MCF 10A (cell line): ENCODE measurements at regions of chr6 and their contacts with region 1.

Region 1: GRCh38 chr6:13711733-13712598 is at the start of gene RANBP9:
- DNase-seq: peak; percentile 82
- H3K4me3 Mint-ChIP-seq: peak within 1 kb of the TSS; percentile 99
- H3K27ac Mint-ChIP-seq: peak within 1 kb of the TSS; percentile 93
- H3K4me1 Mint-ChIP-seq: peaks cover 24% of the 10 kb centered on the region
- H3K27me3 Mint-ChIP-seq: no peaks in the 10 kb centered on the region
- CTCF ChIP-seq: no peak
- total RNA-seq, gene RANBP9: 42.0 and 48.0 TPM in 2 replicates

Region 2: GRCh38 chr6:13671548-13672127 is 40.3 kb before region 1 on chr6:
- CTCF ChIA-PET with region 1: interaction called, 3 read pairs
- POLR2A ChIA-PET with region 1: interaction called, 12 read pairs
- intact Hi-C with region 1: no loop called
- DNase-seq: no peak
- H3K4me3 Mint-ChIP-seq: no peak overlapping the region
- H3K27ac Mint-ChIP-seq: no peak overlapping the region
- H3K4me1 Mint-ChIP-seq: peaks cover 26% of the 10 kb centered on the region
- H3K27me3 Mint-ChIP-seq: no peaks in the 10 kb centered on the region
- CTCF ChIP-seq: no peak

Region 3: DNA sequence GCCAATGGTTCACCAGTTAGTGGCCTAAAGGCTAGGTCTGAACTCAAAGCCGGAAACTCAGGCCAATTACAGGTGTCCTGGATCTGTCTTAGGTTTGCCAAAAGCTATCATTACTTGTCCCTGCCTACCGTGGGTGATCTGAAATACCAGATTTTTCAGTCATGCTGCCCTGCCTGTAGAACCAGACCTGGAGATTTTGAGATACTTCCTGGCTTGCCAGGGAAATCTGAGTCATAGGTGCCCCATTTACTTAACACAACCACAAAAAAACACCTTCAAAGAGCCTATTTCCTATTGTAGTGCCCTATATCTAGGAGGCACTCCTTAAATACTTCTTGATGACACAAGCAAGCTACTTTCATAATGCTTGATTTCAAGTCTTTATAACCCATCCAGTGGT is 13.6 kb after region 1 on chr6:
- CTCF ChIA-PET with region 1: no interaction called
- POLR2A ChIA-PET with region 1: interaction called, 39 read pairs
- intact Hi-C with region 1: no loop called
- DNase-seq: peak; percentile 88
- H3K4me3 Mint-ChIP-seq: no peak overlapping the region
- H3K27ac Mint-ChIP-seq: peak overlapping the region; percentile 84
- H3K4me1 Mint-ChIP-seq: peaks cover 27% of the 10 kb centered on the region
- H3K27me3 Mint-ChIP-seq: no peaks in the 10 kb centered on the region
- CTCF ChIP-seq: no peak

Region 4: DNA sequence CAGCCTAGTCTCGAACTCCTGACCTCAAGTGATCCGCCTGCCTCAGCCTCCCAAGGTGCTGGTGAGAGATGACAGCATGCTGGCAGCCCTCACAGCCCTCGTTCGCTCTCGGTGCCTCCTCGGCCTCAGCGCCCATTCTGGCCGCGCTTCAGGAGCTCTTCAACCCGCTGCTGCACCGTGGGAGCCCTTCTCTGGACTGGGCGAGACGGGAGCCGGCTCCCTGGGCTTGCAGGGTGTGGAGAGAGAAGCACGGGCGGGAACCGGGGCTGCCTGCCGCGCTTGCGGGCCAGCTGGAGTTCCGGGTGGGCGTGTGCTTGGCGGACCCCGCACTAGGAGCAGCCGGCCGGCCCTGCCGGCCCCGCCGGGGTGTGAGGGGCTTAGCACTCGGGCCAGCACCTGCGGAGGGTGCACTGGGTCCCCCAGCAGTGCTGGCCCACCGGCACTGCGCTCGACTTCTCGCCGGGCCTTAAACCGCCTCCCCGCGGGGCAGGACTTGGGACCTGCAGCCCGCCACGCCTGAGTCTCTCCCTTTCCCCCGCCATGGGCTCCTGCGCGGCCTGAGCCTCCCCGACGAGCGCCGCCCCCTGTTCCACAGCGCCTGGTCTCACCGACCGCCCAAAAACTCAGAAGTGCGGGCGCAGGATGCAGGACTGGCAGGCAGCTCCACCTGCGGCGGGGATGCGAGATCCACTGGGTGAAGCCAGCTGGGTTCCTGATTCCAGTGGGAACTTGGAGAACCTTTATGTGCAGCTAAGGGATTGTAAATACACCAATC is 31.2 kb after region 1 on chr6:
- CTCF ChIA-PET with region 1: no interaction called
- POLR2A ChIA-PET with region 1: no interaction called
- intact Hi-C with region 1: no loop called
- DNase-seq: no peak
- H3K4me3 Mint-ChIP-seq: no peak overlapping the region
- H3K27ac Mint-ChIP-seq: no peak overlapping the region
- H3K4me1 Mint-ChIP-seq: no peaks in the 10 kb centered on the region
- H3K27me3 Mint-ChIP-seq: no peaks in the 10 kb centered on the region
- CTCF ChIP-seq: no peak

Region 5: GRCh38 chr6:13762611-13763441 is 50.9 kb after region 1 on chr6:
- CTCF ChIA-PET with region 1: interaction called, 4 read pairs
- POLR2A ChIA-PET with region 1: interaction called, 109 read pairs
- intact Hi-C with region 1: loop called (anchors 2 kb)
- DNase-seq: peak; percentile 91
- H3K4me3 Mint-ChIP-seq: peak overlapping the region; percentile 11
- H3K27ac Mint-ChIP-seq: peak overlapping the region; percentile 86
- H3K4me1 Mint-ChIP-seq: peaks cover 42% of the 10 kb centered on the region
- H3K27me3 Mint-ChIP-seq: no peaks in the 10 kb centered on the region
- CTCF ChIP-seq: no peak

Region 6: DNA sequence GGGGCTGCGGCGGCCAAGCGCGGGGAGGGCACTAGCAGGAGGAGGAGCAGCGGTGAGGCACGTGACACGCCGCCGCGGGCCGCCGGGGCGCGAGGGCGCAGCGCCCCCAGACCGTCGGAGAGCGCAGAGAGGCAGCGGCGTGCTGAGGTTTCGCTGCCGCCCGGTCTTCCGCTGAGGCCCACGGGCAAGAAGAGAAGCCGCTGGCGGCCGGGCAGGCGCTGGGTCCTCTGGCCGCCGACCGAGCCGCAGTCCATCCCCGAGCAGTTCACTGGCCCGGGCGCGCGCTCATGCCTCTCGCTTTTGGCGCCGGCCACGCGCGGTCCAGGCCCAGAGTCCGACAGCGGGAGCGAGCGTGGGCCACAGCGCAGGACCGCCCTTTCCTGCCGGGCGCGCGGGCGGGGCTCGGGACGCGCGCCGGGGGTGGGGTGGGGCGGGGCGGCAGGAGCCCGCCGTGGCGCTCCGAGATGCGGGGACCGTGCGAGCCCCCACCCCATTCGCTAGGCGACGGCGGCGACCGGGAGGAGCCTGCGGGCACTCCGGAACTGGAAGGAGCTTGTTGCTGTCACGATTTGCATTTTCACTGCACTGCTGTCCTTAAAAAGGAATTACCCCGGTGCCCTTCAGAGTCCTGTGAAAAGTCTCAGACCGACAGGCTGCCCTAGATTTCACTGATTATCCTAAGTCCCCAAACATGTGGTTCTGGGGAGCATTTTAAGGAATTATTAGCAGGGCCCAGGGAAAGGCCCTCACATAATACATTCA is 102.4 kb after region 1 on chr6 and contains the start of gene MCUR1:
- CTCF ChIA-PET with region 1: interaction called, 4 read pairs
- POLR2A ChIA-PET with region 1: interaction called, 19 read pairs
- intact Hi-C with region 1: no loop called
- DNase-seq: peak; percentile 85
- H3K4me3 Mint-ChIP-seq: peak within 1 kb of the TSS; percentile 84
- H3K27ac Mint-ChIP-seq: peak within 1 kb of the TSS; percentile 78
- H3K4me1 Mint-ChIP-seq: peaks cover 35% of the 10 kb centered on the region
- H3K27me3 Mint-ChIP-seq: no peaks in the 10 kb centered on the region
- CTCF ChIP-seq: no peak
- total RNA-seq, gene MCUR1: 26.8 and 30.4 TPM in 2 replicates